Activated T-helper 2 cell treated with anti-CD3 and anti-CD28 coated beads, Interferon-gamma antibody, Interleukin-2, Interleukin-4, amounts not matched to agents 10 μg/mL and 5 μg/mL and 100 μg/mL, durations not matched to agents 14 hours and 24 hours and 36 hours (primary cell): ENCODE measurements at regions of chr14 and their contacts with region 1.

Region 1: GRCh38 chr14:87944987-87945604 is 47.9 kb downstream of the GALC start:
- DNase-seq: no peak
- H3K4me3 Mint-ChIP-seq: no peak overlapping the region
- H3K27ac Mint-ChIP-seq: no peak overlapping the region
- H3K4me1 Mint-ChIP-seq: peaks cover 4% of the 10 kb centered on the region
- H3K27me3 Mint-ChIP-seq: no peaks in the 10 kb centered on the region

Region 2: DNA sequence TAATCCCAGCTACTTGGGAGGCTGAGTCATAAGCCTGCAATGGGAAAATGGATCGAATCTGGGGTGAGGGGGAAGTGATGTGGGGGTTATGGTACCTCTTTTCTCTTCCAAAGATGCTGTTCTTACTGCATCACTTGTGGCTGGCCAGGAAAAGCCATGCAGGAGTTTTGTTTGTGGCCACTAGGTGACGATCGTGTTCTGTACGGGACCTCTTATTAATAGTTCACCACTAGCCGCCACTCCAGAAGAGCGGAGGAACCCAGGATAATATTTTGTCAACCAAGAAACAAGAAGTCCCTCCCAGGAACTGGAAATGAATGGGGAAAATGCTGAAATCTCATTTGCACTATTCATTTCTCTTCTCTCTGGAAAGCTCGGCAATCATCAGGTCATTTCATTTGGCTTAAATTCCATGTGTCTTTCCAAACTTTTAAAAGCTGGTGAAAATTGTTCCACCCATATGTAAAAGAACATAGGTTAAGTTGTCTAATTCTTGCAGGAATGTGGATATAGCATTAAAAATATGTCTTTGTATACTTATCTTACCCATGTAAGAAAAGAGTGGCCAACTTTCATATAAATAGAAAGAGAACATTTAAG is 68.8 kb after region 1 on chr14:
- intact Hi-C with region 1: loop called (anchors 5 kb)
- DNase-seq: no peak
- H3K4me3 Mint-ChIP-seq: no peak overlapping the region
- H3K27ac Mint-ChIP-seq: no peak overlapping the region
- H3K4me1 Mint-ChIP-seq: peaks cover 59% of the 10 kb centered on the region
- H3K27me3 Mint-ChIP-seq: no peaks in the 10 kb centered on the region